Activated CD8-positive, alpha-beta T cell treated with anti-CD3 and anti-CD28 coated beads for 36 hours (primary cell): ENCODE measurements at regions of chr19 and their contacts with region 1.

Region 1: GRCh38 chr19:21020298-21021227 is at the start of gene ZNF430:
- DNase-seq: peak; percentile 99
- ATAC-seq: peak; percentile 93
- H3K4me3 Mint-ChIP-seq: peak within 1 kb of the TSS; percentile 100
- H3K27ac Mint-ChIP-seq: peak within 1 kb of the TSS; percentile 100
- H3K4me1 Mint-ChIP-seq: peaks cover 33% of the 10 kb centered on the region
- H3K27me3 Mint-ChIP-seq: no peaks in the 10 kb centered on the region
- CTCF ChIP-seq: no peak
- total RNA-seq, gene ZNF430: 20.4 to 20.8 TPM

Region 2: GRCh38 chr19:20923077-20923871 is 97.3 kb before region 1 on chr19 and contains the start of gene ZNF85:
- CTCF ChIA-PET with region 1: no interaction called
- POLR2A ChIA-PET with region 1: no interaction called
- intact Hi-C with region 1: loop called (anchors 10 kb)
- DNase-seq: peak; percentile 97
- ATAC-seq: peak; percentile 99
- H3K4me3 Mint-ChIP-seq: peak within 1 kb of the TSS; percentile 99
- H3K27ac Mint-ChIP-seq: peak within 1 kb of the TSS; percentile 96
- H3K4me1 Mint-ChIP-seq: peaks cover 32% of the 10 kb centered on the region
- H3K27me3 Mint-ChIP-seq: no peaks in the 10 kb centered on the region
- CTCF ChIP-seq: no peak
- total RNA-seq, gene ZNF85: 17.6 to 18.6 TPM

Region 3: DNA sequence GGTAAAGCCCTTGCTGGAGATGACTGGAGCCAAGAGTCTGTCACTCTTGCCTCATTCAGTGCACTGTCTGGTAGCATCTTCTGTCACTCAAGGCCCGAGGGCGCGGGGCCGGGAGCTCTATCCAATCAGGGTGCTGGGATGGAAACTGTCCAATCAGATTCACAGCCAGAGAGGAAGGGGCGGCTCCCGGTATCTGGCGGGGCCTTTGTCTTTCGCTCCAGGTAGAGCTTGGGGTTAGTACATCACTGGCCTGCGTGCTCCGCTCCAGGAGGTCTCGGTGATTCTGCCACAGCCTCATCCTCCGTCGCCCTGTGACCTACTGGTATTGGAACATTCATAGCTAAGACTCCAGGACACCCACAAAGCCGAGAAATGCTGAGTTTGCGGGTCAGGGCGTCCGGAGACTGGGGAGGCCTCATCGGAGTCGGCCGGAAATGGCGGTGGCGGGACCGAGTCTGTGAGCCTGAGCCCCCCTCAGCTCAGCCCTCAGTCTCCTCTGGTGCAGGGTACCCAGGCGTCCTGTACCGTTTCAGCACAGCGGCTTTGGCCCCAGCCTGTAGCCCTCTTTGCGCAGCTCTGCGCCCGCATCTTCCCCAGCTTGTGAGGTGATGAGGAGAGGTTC is 20.7 kb before region 1 on chr19:
- CTCF ChIA-PET with region 1: interaction called, 5 read pairs
- POLR2A ChIA-PET with region 1: interaction called, 13 read pairs
- intact Hi-C with region 1: no loop called
- DNase-seq: peak; percentile 96
- ATAC-seq: peak; percentile 100
- H3K4me3 Mint-ChIP-seq: peak overlapping the region; percentile 96
- H3K27ac Mint-ChIP-seq: peak overlapping the region; percentile 95
- H3K4me1 Mint-ChIP-seq: peaks cover 8% of the 10 kb centered on the region
- H3K27me3 Mint-ChIP-seq: no peaks in the 10 kb centered on the region
- CTCF ChIP-seq: no peak

Region 4: DNA sequence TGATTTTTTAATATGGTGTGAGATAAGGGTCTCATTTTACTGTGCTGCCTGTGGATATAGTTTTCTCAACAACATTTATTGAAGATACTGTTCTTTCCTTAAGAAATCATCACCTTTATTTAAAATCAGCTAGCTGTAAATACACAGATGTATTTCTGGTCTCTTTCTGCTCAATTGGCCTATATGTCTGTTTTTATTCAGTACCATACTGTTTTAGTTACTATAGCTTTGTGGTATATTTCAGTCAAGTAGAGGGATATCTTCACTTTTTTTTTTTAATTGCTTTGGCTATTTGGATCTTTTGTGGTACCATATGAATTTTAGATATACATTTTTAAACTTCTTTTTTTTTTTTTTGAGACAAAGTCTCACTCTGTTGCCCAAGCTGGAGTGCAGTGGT is 44.8 kb after region 1 on chr19:
- CTCF ChIA-PET with region 1: no interaction called
- POLR2A ChIA-PET with region 1: no interaction called
- intact Hi-C with region 1: no loop called
- DNase-seq: no peak
- ATAC-seq: no peak
- H3K4me3 Mint-ChIP-seq: no peak overlapping the region
- H3K27ac Mint-ChIP-seq: no peak overlapping the region
- H3K4me1 Mint-ChIP-seq: no peaks in the 10 kb centered on the region
- H3K27me3 Mint-ChIP-seq: no peaks in the 10 kb centered on the region
- CTCF ChIP-seq: no peak

Region 5: DNA sequence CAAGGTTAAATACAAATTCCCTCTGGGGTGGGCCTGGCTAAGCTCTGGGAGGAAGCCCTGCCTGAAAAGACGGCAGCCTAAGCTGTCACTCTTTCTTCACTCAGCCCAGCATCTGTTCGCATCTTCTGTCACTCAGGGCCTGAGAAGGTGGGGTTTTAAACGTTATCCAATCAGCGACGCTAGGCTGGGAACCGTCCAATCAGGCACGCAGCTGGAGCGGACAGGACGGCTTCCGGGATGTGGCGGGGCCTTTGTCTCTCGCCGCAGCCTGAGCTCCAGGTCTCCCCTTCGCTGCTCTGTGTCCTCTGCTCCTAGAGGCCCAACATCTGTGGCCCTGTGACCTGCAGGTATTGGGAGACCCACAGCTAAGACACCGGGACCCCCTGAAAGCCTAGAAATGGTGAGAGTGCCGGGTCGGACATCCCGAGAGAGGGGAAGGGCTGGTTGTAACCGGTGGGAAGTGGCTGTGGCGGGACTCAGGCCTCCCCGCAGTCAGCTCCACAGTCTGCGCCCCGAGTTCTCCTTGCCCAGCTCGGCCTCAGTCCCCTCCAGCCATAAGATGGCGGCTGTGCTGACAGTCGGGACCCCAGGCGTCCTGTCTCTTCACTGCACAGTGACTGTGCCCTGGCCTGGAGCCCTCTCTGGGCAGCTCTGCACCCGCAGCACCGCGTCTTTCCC is 121.4 kb after region 1 on chr19 and contains the start of gene ZNF431:
- CTCF ChIA-PET with region 1: interaction called, 3 read pairs
- POLR2A ChIA-PET with region 1: no interaction called
- intact Hi-C with region 1: loop called (anchors 10 kb)
- DNase-seq: peak; percentile 95
- ATAC-seq: peak; percentile 99
- H3K4me3 Mint-ChIP-seq: peak within 1 kb of the TSS; percentile 97
- H3K27ac Mint-ChIP-seq: peak within 1 kb of the TSS; percentile 96
- H3K4me1 Mint-ChIP-seq: peaks cover 35% of the 10 kb centered on the region
- H3K27me3 Mint-ChIP-seq: no peaks in the 10 kb centered on the region
- CTCF ChIP-seq: no peak
- total RNA-seq, gene ZNF431: 16.8 to 18.7 TPM